Activated naive CD4-positive, alpha-beta T cell treated with anti-CD3 and anti-CD28 coated beads for 36 hours (primary cell): ENCODE measurements at regions of chrX and their contacts with region 1.

Region 1: DNA sequence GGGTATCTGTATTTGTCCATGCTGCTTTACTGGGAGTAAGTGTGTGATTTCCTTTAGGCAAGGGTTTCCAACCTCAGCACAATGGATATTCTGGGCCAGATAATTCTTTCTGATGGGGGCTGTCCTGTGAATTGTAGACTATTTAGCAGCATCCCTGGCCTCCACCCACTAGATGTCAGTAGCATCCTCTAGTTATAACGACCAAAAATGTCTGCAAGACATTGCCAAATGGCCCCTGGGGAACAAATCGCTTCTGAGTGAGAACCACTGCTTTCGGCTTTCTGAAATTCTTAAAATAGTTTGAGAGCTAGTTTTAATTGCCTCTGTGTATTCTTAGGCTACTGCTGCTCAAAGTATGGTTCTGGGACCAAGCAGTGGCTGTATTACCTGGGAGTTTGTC is 81.2 kb upstream of the GPM6B start:
- DNase-seq: peak; percentile 15
- H3K4me3 Mint-ChIP-seq: no peak overlapping the region
- H3K27ac Mint-ChIP-seq: no peak overlapping the region
- H3K4me1 Mint-ChIP-seq: peaks cover 2% of the 10 kb centered on the region
- H3K27me3 Mint-ChIP-seq: no peaks in the 10 kb centered on the region

Region 2: DNA sequence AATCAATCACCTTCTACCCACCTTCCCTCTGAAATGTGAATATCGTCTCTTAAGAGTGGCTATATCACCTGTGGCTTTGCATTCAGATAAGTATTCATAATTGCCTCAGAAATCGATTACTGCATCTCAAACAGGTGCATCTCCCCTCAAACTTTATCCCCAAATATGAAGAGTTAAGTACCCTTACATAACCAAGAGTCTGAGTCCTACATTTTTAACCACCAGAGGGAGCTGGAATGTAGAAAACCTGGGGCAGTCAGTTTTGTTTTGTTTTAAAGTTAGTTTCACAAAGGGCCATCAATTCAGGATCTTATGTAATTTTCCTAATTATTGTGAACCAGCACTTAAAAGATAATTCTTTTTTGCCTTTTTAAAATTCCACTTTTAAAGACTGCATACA is 239.5 kb before region 1 on chrX:
- CTCF ChIA-PET with region 1: no interaction called
- intact Hi-C with region 1: loop called (anchors 5 kb)
- DNase-seq: no peak
- H3K4me3 Mint-ChIP-seq: no peak overlapping the region
- H3K27ac Mint-ChIP-seq: no peak overlapping the region
- H3K4me1 Mint-ChIP-seq: peaks cover 32% of the 10 kb centered on the region
- H3K27me3 Mint-ChIP-seq: no peaks in the 10 kb centered on the region

Region 3: DNA sequence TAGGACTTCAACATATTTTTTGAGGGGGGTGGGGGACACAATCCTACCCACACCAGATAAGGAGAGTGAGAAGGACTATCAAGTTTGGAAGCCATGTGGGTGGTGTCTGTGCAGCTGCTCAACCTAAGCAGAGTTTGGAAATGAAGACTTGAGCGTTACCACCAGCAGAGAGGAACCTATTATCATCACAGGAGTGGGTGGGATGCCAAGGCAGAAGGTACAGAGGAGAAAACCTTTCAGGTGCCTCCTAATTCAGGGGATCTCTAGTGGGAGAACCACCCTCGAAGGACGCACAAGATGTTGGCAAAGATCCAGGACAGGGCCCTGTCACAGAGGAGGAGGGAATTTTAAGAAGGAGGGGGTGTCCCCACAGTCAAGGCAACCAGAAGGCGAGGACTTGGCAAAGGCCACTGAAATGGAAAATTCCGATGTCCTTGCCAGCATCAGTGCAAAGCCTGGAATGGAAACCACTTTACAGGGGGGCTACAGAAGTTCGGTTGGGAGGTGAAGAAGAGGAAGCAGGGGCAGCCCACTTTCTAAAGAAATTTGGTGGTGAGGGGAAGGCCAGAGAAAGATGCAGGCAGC is 72.8 kb before region 1 on chrX:
- CTCF ChIA-PET with region 1: no interaction called
- intact Hi-C with region 1: no loop called
- DNase-seq: no peak
- H3K4me3 Mint-ChIP-seq: no peak overlapping the region
- H3K27ac Mint-ChIP-seq: no peak overlapping the region
- H3K4me1 Mint-ChIP-seq: no peaks in the 10 kb centered on the region
- H3K27me3 Mint-ChIP-seq: peaks cover 3% of the 10 kb centered on the region

Region 4: DNA sequence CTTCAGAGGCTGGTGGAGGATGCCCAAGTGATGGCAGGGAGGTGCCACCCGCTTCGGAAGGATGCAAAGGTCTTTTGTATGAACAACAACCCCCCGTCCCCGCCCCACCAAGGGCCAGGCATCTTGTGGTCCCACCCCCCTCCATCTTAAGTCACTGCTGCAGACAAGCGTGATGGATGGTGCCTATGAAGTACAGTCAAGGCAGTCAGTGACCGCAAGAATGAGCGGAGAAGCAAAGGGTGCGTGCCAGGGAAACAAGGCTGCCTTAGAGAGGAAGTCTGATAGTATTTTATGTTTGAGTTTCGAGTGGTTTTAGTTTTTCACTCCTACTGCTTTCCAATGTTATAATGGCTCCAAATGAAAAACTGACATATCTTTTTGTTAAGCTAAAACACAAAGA is 12.5 kb before region 1 on chrX:
- CTCF ChIA-PET with region 1: no interaction called
- intact Hi-C with region 1: no loop called
- DNase-seq: no peak
- H3K4me3 Mint-ChIP-seq: no peak overlapping the region
- H3K27ac Mint-ChIP-seq: no peak overlapping the region
- H3K4me1 Mint-ChIP-seq: no peaks in the 10 kb centered on the region
- H3K27me3 Mint-ChIP-seq: no peaks in the 10 kb centered on the region